CD4-positive, alpha-beta T cell (primary cell): ENCODE measurements at regions of chr10 and their contacts with region 1.

Region 1: GRCh38 chr10:87635610-87636312 is 23.9 kb upstream of the PAPSS2 start:
- DNase-seq: peak in 3 of 14 experiments; percentile 23 to 52 (median 47)
- ATAC-seq: no peak
- H3K4me3 ChIP-seq: no peak overlapping the region
- H3K4me3 Mint-ChIP-seq: no peak overlapping the region
- H3K27ac ChIP-seq: no peak overlapping the region
- H3K27ac Mint-ChIP-seq: no peak overlapping the region
- H3K4me1 ChIP-seq: no peaks in the 10 kb centered on the region
- H3K4me1 Mint-ChIP-seq: no peaks in the 10 kb centered on the region
- H3K27me3 ChIP-seq: no peaks in the 10 kb centered on the region
- H3K27me3 Mint-ChIP-seq: no peaks in the 10 kb centered on the region
- CTCF ChIP-seq: no peak

Region 2: DNA sequence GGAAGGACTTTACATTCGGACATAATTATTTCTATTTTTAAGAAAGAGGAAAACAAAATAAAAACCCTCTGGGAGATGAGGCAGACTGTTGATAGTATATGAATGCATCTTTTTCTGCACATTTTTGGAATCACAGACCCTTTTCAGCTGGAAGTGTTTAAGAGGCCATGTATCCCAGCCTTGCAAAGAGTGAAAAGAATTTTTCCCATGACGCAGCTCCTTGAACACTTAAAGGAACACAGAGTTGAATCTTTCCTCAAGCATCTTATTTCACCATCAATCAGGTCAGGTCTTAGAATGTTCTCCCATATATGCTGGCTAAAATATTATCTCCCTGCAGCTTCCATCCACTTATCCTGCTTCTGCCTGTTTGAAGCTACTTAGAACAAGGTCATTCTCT is 22.0 kb before region 1 on chr10:
- CTCF ChIA-PET with region 1: no interaction called
- POLR2A ChIA-PET with region 1: no interaction called
- intact Hi-C with region 1: loop called in 1 of 2 experiments (anchors 2 kb)
- DNase-seq: no peak
- ATAC-seq: no peak
- H3K4me3 ChIP-seq: no peak overlapping the region
- H3K4me3 Mint-ChIP-seq: no peak overlapping the region
- H3K27ac ChIP-seq: no peak overlapping the region
- H3K27ac Mint-ChIP-seq: no peak overlapping the region
- H3K4me1 ChIP-seq: no peaks in the 10 kb centered on the region
- H3K4me1 Mint-ChIP-seq: no peaks in the 10 kb centered on the region
- H3K27me3 ChIP-seq: peaks cover 0 to 4% of the 10 kb centered on the region in 2 experiments
- H3K27me3 Mint-ChIP-seq: peaks cover 8% of the 10 kb centered on the region
- CTCF ChIP-seq: no peak

Region 3: DNA sequence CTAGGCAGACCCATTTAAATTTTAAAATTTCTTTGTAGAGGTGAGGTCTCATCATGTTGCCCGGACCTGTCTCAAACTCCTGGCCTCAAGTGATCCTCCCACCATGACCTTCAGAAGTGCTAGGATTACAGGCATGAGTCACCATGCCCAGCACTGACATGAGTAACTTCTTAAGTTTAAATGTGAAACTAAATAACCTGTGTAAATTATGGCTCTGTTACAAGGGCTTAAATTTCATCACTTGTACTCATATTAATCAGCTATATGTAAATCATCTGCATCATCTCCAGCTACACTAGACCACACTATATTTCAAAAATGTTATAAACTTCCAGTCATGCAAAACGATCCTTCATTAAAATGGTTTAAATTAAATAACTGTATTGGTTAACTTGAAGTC is 126.1 kb after region 1 on chr10:
- CTCF ChIA-PET with region 1: no interaction called
- POLR2A ChIA-PET with region 1: no interaction called
- intact Hi-C with region 1: no loop called
- DNase-seq: peak in 3 of 14 experiments; percentile 14 to 33 (median 24)
- ATAC-seq: no peak
- H3K4me3 ChIP-seq: no peak overlapping the region
- H3K4me3 Mint-ChIP-seq: no peak overlapping the region
- H3K27ac ChIP-seq: no peak overlapping the region
- H3K27ac Mint-ChIP-seq: no peak overlapping the region
- H3K4me1 ChIP-seq: no peaks in the 10 kb centered on the region
- H3K4me1 Mint-ChIP-seq: peaks cover 5% of the 10 kb centered on the region
- H3K27me3 ChIP-seq: no peaks in the 10 kb centered on the region
- H3K27me3 Mint-ChIP-seq: no peaks in the 10 kb centered on the region
- CTCF ChIP-seq: no peak